ENCODE measurements at regions of chr14 and their contacts with region 1.

Region 1: GRCh38 chr14:50396631-50397390 is at the start of gene CDKL1:
- DNase-seq: peak; percentile 88
- total RNA-seq, gene CDKL1: 10.2 to 17.4 TPM

Region 2: DNA sequence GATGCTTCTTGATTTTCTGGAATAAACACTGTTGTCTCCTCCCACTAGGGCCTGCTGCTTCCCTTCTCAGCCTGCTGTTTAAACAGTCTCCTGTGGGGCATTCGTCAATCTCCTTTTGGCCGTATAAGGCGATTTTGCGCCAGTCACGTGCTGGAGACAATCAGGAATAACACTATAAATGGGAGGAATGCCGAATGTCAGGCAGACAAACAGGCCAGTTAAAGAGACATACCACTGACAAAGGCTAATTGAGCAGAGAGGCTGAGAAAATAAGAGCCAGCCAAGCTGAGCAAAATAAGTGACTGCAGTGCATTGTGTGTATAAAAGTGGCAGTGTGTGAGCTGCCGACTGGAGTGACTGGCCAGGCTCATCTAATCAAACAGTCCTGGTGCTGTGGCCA is 61.4 kb before region 1 on chr14:
- intact Hi-C with region 1: loop called (anchors 10 kb)
- DNase-seq: peak; percentile 88

Region 3: GRCh38 chr14:50342221-50343078 is 54.4 kb before region 1 on chr14:
- intact Hi-C with region 1: loop called (anchors 10 kb)
- DNase-seq: no peak

Measured in posterior vena cava (tissue), 2 donors.